HCT116 (cell line): ENCODE measurements at regions of chr11 and their contacts with region 1.

Region 1: DNA sequence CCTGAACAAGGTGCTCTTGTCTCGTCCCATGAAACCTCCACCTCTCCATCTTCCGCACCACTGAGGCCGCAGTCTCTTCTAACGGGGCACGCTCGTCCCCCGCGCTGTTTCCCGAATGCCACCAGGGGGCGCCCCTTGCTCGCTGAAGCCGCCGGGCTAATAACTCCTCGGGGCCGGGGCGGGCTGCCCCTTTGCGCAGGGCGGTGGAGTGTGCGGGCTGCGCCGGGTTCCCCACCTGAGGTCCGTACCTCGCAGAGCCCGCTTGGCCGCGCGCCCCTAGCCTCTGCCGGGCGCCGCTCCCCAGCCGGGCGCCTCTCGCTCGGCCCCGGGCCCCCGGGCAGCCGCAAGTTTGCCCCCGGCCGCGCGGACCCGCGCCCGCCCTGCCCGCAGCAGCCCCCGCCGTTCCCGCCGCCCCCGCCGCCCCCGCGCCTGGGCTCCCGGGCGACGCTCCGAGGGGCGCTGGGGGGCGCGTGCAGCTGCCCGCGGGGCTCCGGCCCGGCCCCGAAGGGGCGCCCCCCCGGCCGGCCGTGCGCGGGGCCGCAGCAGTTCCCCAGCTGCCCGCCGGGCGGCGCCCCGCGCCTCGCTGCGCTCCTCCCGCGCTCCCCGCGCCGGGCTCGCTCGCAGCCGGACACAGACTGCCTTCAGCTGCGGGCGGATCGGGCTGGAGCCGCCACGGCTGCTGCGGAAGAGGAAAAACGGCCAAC is at the start of gene GRIK4:
- DNase-seq: peak; percentile 39
- ATAC-seq: peak; percentile 93
- H3K4me3 ChIP-seq: peak within 1 kb of the TSS; percentile 25 to 49
- H3K27ac ChIP-seq: peak within 1 kb of the TSS; percentile 14; the same call in 1 of the 2 replicates
- H3K4me1 ChIP-seq: no peaks in the 10 kb centered on the region; a peak in 1 of 4 replicates
- H3K27me3 ChIP-seq: no peaks in the 10 kb centered on the region
- CTCF ChIP-seq: peak; percentile 93 to 94 (median 93)
- POLR2A ChIP-seq: no peak
- RAD21 ChIP-seq: peak; percentile 99
- total RNA-seq, gene GRIK4: 0.52 TPM

Region 2: DNA sequence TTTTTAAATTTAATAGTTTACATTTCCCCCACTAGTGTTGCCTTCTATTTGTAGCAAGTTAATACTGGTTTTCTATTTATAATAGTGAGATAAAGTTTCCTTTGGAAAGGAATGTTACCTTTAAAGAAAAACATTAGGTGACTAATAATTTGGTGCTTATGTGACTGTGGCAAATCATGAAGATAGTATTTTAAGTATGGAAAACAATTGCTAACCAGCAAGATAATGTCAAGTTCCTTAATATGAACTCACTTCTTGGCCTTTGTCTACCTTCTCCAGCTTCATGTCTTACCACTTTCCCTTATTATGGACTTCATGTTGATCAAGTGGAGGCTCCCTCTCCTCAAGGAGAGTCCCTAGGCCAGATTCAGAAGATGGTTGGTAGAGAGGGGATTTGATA is 147.8 kb before region 1 on chr11:
- CTCF ChIA-PET with region 1: no interaction called
- POLR2A ChIA-PET with region 1: no interaction called
- RAD21 ChIA-PET with region 1: no interaction called
- intact Hi-C with region 1: no loop called
- DNase-seq: no peak
- ATAC-seq: no peak
- H3K4me3 ChIP-seq: no peak overlapping the region
- H3K27ac ChIP-seq: no peak overlapping the region
- H3K4me1 ChIP-seq: no peaks in the 10 kb centered on the region
- H3K27me3 ChIP-seq: no peaks in the 10 kb centered on the region
- CTCF ChIP-seq: no peak
- POLR2A ChIP-seq: no peak
- RAD21 ChIP-seq: no peak

Region 3: GRCh38 chr11:120682866-120683265 is 171.6 kb after region 1 on chr11:
- CTCF ChIA-PET with region 1: interaction called, 11 read pairs
- POLR2A ChIA-PET with region 1: no interaction called
- RAD21 ChIA-PET with region 1: interaction called, 3 to 9 read pairs
- intact Hi-C with region 1: loop called (anchors 1 kb)
- DNase-seq: no peak
- ATAC-seq: no peak
- H3K4me3 ChIP-seq: no peak overlapping the region
- H3K27ac ChIP-seq: no peak overlapping the region
- H3K4me1 ChIP-seq: no peaks in the 10 kb centered on the region
- H3K27me3 ChIP-seq: no peaks in the 10 kb centered on the region; the same call in 1 of the 2 replicates
- CTCF ChIP-seq: no peak
- POLR2A ChIP-seq: no peak
- RAD21 ChIP-seq: no peak

Region 4: DNA sequence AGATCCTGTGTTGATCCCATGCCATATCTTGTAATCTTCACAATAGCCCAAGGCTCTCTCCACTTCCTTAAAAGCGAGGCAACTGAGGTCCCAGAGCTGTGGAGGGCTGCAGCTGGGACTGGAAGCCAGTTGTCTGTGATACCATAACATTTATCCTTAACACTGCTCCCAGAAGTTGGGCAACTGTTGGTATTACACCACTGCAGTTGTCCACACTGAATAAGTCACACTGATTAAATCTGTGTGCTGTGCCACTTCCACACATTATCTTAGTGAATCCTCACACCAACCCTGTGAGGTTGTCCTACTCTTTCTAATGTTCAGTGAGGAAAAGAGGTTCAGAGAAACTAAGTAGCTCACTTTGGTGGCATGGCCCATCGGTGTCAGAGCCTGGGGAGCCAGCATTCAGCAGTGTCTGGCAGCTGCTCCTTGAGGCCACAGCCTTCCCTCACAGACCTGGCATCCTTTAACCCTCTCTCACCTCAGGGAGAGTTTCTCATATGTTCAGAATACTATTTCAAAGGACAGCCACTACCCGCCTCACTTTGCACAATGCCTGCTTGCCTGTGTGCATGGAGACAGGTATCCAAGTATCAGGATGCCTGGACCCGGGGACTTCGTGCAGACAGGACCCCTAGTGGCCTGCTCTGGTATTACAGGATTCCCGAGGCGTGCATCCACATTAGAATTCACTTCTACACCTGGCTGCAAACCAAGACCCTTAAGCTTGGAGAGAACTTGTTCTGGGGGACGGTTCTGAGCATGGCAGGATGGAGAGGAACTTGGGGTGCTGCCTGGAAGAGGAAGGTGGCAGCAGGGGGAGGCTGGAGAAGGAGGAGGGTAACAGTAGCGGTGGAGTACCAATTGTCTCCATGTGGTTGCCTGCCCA is 290.8 kb after region 1 on chr11:
- CTCF ChIA-PET with region 1: interaction called, 4 read pairs
- POLR2A ChIA-PET with region 1: no interaction called
- RAD21 ChIA-PET with region 1: no interaction called
- intact Hi-C with region 1: loop called (anchors 2 kb)
- DNase-seq: peak; percentile 32
- ATAC-seq: peak; percentile 90
- H3K4me3 ChIP-seq: no peak overlapping the region
- H3K27ac ChIP-seq: no peak overlapping the region
- H3K4me1 ChIP-seq: peaks cover 9 to 14% of the 10 kb centered on the region in 2 experiments
- H3K27me3 ChIP-seq: no peaks in the 10 kb centered on the region; the same call in 1 of the 2 replicates
- CTCF ChIP-seq: peak; percentile 69 to 95 (median 93); a peak in 5 of 6 replicates
- POLR2A ChIP-seq: no peak
- RAD21 ChIP-seq: peak; percentile 76

Region 5: GRCh38 chr11:120929664-120930154 is 418.4 kb after region 1 on chr11:
- CTCF ChIA-PET with region 1: interaction called, 3 read pairs
- POLR2A ChIA-PET with region 1: no interaction called
- RAD21 ChIA-PET with region 1: no interaction called
- intact Hi-C with region 1: loop called (anchors 5 kb)
- DNase-seq: peak; percentile 61
- ATAC-seq: peak; percentile 97
- H3K4me3 ChIP-seq: no peak overlapping the region
- H3K27ac ChIP-seq: no peak overlapping the region
- H3K4me1 ChIP-seq: peaks cover 2 to 8% of the 10 kb centered on the region in 2 experiments; a peak in 1 of 4 replicates
- H3K27me3 ChIP-seq: no peaks in the 10 kb centered on the region
- CTCF ChIP-seq: peak; percentile 69 to 87 (median 87)
- POLR2A ChIP-seq: no peak
- RAD21 ChIP-seq: peak; percentile 66

Region 6: DNA sequence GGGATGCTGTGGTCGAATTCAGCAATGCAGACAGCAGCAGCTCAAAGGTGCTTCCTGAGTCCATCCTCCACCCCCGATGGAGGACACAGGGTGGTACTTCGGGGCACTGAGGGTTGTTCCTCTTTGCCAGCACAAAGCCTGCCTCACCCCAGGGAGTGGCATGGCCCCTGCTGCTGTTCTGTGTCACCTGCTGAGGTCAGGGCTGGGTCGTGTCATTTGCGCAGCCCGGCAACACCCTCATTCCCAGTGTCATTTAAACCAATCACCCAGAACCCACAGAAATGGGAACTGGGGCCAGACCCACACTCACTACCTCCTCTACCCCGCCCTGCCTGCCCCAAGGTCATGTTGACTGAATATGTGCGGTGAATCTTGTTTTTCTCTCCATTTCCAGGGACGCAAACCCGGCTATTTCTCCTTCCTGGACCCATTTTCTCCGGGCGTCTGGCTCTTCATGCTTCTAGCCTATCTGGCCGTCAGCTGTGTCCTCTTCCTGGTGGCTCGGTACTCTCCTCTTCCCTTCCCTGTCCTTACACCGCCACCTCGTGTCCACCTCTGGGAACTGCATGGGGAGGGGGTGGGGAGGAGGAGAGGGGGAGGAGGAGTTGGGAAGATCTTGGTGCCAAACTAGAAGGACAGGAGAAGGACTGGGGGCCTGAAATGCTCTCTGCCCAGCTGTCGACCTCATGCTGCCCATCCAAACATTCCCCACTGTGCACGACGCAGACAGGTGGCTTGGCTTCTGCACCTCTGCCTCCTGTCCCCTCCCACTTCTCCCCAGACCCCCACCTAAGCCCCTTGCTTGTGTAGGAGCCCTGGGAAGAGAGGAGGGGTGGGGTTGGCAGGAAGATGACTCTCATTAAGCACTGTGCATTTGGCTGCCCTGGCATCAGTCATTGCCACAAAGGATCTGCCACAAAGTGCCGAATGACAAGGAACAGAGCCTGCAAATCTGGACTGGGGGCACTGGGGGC is 441.5 kb after region 1 on chr11:
- CTCF ChIA-PET with region 1: interaction called, 6 read pairs
- POLR2A ChIA-PET with region 1: no interaction called
- RAD21 ChIA-PET with region 1: no interaction called
- intact Hi-C with region 1: loop called (anchors 1 kb)
- DNase-seq: peak; percentile 61
- ATAC-seq: peak; percentile 97
- H3K4me3 ChIP-seq: peak overlapping the region in 1 of 2 experiments; percentile 11; a peak in 1 of 4 replicates
- H3K27ac ChIP-seq: no peak overlapping the region
- H3K4me1 ChIP-seq: peaks cover 0 to 9% of the 10 kb centered on the region in 2 experiments; a peak in 2 of 4 replicates
- H3K27me3 ChIP-seq: peaks cover 8% of the 10 kb centered on the region; the same call in 1 of the 2 replicates
- CTCF ChIP-seq: peak; percentile 87 to 91 (median 89)
- POLR2A ChIP-seq: no peak
- RAD21 ChIP-seq: peak; percentile 91

Region 7: DNA sequence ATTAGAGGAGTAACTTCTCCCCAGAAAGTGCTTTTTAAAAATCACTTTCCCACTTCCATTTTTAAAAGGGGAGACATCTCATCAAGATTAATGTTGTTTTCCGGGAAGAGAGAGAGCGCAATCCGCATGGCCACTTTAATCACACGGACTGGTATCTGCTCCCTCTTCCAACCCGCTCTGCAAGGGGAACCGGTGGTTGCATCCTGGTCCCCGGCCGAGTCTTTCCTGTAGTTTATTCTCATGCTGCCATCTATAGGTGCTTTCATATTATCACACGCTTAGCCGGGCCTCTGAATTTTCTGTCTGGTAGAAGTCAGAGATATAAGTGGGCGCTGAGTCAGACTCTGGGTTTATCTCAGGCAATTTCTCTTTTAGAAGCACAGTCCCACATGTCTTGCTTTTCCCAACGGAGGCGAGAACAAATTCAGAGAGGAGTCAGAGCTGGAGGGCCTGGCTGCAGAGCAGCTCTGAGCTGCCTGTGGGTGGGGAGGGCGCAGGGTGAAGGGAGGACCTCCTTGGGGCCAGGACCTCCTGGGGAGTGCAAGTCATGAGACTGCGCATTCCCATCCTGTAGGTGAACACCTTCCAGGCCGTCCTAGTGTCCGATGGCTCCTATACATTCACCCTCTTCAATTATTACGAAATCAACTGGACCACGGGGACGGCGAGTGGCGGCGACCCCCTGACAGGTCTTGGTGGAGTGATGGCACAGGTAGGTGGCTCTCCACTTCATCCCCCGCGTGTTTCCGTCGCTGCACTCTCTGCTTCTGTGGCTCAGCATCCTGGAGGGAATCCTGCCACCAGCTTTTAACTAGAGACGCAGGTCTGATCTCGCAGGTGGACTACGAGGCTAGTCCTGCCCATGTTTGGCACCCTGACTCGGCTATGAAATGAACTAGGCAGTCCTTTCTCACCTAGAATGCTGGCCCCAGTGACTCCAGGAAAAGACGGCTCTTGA is 601.5 kb after region 1 on chr11:
- CTCF ChIA-PET with region 1: no interaction called
- POLR2A ChIA-PET with region 1: no interaction called
- RAD21 ChIA-PET with region 1: no interaction called
- intact Hi-C with region 1: loop called (anchors 5 kb)
- DNase-seq: peak; percentile 35
- ATAC-seq: peak; percentile 98
- H3K4me3 ChIP-seq: no peak overlapping the region
- H3K27ac ChIP-seq: no peak overlapping the region
- H3K4me1 ChIP-seq: 0 out of 4 replicates have a peak, but pooled peaks cover 0 to 3% of the 10 kb centered on the region in 2 experiments
- H3K27me3 ChIP-seq: peaks cover 8% of the 10 kb centered on the region; the same call in 1 of the 2 replicates
- CTCF ChIP-seq: peak; percentile 43 to 70 (median 67)
- POLR2A ChIP-seq: no peak
- RAD21 ChIP-seq: peak; percentile 81

Region 8: GRCh38 chr11:121194731-121195596 is 683.7 kb after region 1 on chr11:
- CTCF ChIA-PET with region 1: no interaction called
- POLR2A ChIA-PET with region 1: no interaction called
- RAD21 ChIA-PET with region 1: no interaction called
- intact Hi-C with region 1: loop called (anchors 5 kb)
- DNase-seq: peak; percentile 63
- ATAC-seq: peak; percentile 99
- H3K4me3 ChIP-seq: peak overlapping the region; percentile 1 to 27; a peak in 2 of 4 replicates
- H3K27ac ChIP-seq: no peak overlapping the region
- H3K4me1 ChIP-seq: peaks cover 0 to 7% of the 10 kb centered on the region in 2 experiments; a peak in 2 of 4 replicates
- H3K27me3 ChIP-seq: no peaks in the 10 kb centered on the region; the same call in 1 of the 2 replicates
- CTCF ChIP-seq: peak; percentile 71 to 84 (median 76)
- POLR2A ChIP-seq: no peak
- RAD21 ChIP-seq: peak; percentile 91